GM18951 (cell line): ENCODE measurements at regions of chr11 and their contacts with region 1.

Region 1: GRCh38 chr11:46242916-46243795 is 34.3 kb upstream of the CREB3L1 start:
- POLR2A ChIP-seq: peak; percentile 85

Region 2: DNA sequence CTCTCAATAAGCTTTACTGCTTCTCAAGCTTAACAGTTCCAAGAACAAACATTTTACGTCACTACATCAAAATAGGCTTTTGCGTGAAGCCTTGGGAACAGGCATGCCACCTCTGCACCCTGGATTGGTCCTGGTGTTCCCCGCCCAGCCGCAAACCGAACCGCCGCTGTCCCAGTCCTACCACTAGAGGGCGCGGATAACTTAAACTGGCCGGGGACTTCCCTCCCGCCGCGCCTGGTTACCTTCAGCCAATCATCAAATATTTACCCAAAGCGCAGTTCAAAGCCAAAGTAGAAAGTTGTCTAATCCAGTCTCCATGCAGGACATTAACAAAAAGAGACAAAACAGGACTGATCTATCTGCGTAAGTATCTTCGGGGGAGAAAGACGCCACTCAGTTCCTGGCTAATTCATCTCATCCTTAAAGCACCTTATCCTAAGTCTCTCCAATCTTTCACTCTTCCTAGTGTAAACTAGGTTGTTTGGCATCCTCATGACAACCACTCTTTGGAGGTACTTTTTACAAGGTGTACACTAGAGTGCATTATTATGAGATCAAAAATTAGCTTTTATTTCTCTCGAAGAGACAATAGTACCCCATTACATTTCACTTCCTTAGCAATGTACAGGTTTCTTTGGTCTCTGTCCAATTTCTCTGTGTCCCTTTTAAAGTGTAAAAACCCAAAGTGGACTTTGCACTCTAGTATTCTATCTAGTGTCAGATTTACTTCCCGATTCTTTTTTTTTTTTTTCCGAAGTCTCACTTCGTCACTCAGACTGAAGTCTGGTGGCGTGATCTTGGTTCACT is 399.8 kb before region 1 on chr11:
- in situ Hi-C with region 1: no loop called
- POLR2A ChIP-seq: no peak

Region 3: GRCh38 chr11:46315033-46315738 is 72.0 kb after region 1 on chr11:
- in situ Hi-C with region 1: loop called (anchors 10 kb)
- POLR2A ChIP-seq: no peak